ENCODE measurements at regions of chr22 and their contacts with region 1.

Region 1: DNA sequence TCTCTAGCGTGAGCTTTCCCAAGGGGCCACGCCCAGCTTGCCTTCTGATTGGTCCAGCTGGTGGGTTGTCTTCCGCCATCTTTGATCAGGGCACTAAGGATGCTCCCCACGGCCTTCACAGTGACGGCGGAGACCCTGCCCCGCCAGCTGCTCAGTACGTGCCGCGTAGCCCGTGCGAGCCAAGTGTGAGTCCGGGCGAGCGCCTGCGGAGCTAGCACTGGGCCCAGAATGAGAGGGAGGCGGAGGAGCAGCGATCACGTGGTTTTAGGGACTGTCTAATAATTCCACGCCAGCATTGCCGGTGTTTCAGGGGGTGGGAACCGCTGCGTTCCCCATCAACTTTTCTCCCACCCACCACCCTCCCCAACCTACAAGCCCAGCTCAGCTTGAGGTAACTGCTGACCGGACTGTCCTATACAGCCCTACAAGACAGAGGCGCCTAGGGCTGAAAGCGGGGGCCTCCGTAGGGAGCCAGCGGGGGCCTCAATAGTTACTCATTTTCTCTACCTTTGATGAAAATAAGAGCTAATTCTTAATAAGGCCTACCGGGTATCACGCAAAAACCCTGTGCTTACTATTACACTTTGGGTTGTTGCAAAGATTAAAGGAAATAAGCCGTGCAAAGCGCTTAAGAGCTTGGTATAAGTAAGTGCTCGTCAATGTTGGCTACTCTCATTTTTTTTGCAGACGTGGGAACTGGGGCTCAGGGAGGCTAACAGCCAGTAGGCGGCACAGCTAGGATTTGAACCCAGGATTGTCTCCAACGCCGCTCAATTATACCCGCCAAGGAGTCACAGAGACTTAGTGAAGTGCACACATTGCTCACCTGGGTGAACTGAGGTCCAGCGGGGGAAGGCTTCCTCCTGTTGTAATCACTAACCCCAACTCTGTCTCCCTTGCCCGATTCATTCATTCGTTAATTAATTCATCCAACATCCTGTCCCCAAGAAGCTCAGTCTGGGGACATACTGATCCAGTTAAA is 1.3 kb upstream of the MTFP1 start:
- DNase-seq: peak; percentile 98 to 99
- H3K4me3 ChIP-seq: peak overlapping the region; percentile 62
- H3K4me3 Mint-ChIP-seq: peak overlapping the region; percentile 85
- H3K27ac Mint-ChIP-seq: peak overlapping the region; percentile 82
- H3K4me1 ChIP-seq: peaks cover 39% of the 10 kb centered on the region
- H3K4me1 Mint-ChIP-seq: peaks cover 35% of the 10 kb centered on the region
- H3K27me3 ChIP-seq: no peaks in the 10 kb centered on the region
- H3K27me3 Mint-ChIP-seq: no peaks in the 10 kb centered on the region
- CTCF ChIP-seq: no peak

Region 2: GRCh38 chr22:30196141-30196879 is 228.0 kb before region 1 on chr22:
- CTCF ChIA-PET with region 1: no interaction called
- POLR2A ChIA-PET with region 1: interaction called, 15 read pairs
- intact Hi-C with region 1: no loop called
- DNase-seq: peak; percentile 84 to 90
- H3K4me3 ChIP-seq: peak overlapping the region; percentile 16
- H3K4me3 Mint-ChIP-seq: peak overlapping the region; percentile 67
- H3K27ac Mint-ChIP-seq: peak overlapping the region; percentile 93
- H3K4me1 ChIP-seq: peaks cover 25% of the 10 kb centered on the region
- H3K4me1 Mint-ChIP-seq: peaks cover 12% of the 10 kb centered on the region
- H3K27me3 ChIP-seq: no peaks in the 10 kb centered on the region
- H3K27me3 Mint-ChIP-seq: no peaks in the 10 kb centered on the region
- CTCF ChIP-seq: no peak

Region 3: GRCh38 chr22:30356449-30357235 is 67.6 kb before region 1 on chr22 and contains the starts of genes CCDC157 and SF3A1:
- CTCF ChIA-PET with region 1: no interaction called
- POLR2A ChIA-PET with region 1: interaction called, 12 read pairs
- intact Hi-C with region 1: no loop called
- DNase-seq: peak; percentile 90
- H3K4me3 ChIP-seq: peak within 1 kb of the TSS; percentile 99
- H3K4me3 Mint-ChIP-seq: peak within 1 kb of the TSS; percentile 95
- H3K27ac Mint-ChIP-seq: peak within 1 kb of the TSS; percentile 92
- H3K4me1 ChIP-seq: peaks cover 35% of the 10 kb centered on the region
- H3K4me1 Mint-ChIP-seq: peaks cover 36% of the 10 kb centered on the region
- H3K27me3 ChIP-seq: no peaks in the 10 kb centered on the region
- H3K27me3 Mint-ChIP-seq: no peaks in the 10 kb centered on the region
- CTCF ChIP-seq: no peak
- total RNA-seq, gene CCDC157: 4.8 and 4.9 TPM in 2 replicates
- total RNA-seq, gene SF3A1: 182 and 188 TPM in 2 replicates

Region 4: DNA sequence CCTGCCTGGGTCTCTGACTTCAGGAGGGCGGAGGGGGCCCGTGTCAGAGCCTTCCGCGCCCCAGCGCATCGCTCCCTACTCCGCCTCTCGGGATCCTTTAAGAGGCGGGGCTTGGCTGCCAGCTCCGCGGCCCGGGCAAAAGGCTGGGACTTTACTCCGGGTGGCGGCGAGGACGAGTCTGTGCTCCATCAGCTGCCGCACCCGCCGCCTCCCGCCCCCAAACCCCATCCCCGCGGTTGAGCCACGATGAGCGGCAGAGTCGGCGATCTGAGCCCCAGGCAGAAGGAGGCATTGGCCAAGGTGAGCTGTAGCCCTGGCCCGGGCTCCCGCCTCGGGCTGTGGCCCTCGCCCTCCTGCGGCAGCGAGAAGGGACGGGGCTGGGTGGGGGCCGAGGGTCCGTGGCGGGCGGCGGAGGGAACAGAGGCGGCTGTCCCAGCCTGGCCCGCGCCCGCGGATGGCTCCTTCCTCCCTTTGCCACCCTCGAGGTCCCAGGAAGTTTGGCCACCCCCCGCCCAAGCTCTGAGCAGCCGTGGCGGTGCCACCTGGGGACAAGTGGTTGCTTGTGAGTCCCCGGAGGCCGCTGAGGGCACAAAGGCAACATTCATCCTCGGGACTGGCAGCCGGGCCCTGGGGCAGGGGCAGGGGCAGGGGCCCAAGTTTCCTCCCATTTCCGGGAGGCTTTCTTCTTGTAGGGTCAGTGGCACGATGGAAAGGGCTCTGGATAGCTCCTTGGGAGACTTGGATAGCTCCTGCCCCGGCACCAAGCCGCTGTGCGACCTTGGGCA is 27.2 kb before region 1 on chr22 and contains the start of gene SEC14L2:
- CTCF ChIA-PET with region 1: interaction called, 29 read pairs
- POLR2A ChIA-PET with region 1: interaction called, 19 read pairs
- intact Hi-C with region 1: no loop called
- DNase-seq: peak; percentile 57 to 63
- H3K4me3 ChIP-seq: peak within 1 kb of the TSS; percentile 87
- H3K4me3 Mint-ChIP-seq: peak within 1 kb of the TSS; percentile 76
- H3K27ac Mint-ChIP-seq: peak within 1 kb of the TSS; percentile 29
- H3K4me1 ChIP-seq: peaks cover 9% of the 10 kb centered on the region; the same call in 1 of the 2 replicates
- H3K4me1 Mint-ChIP-seq: peaks cover 14% of the 10 kb centered on the region
- H3K27me3 ChIP-seq: no peaks in the 10 kb centered on the region
- H3K27me3 Mint-ChIP-seq: no peaks in the 10 kb centered on the region
- CTCF ChIP-seq: no peak
- total RNA-seq, gene SEC14L2: 9.4 and 11.0 TPM in 2 replicates